H1 (cell line): ENCODE measurements at regions of chr16 and their contacts with region 1.

Region 1: GRCh38 chr16:84746882-84747281 is 47.1 kb downstream of the USP10 start:
- DNase-seq: no peak
- H3K4me3 ChIP-seq: no peak overlapping the region
- H3K27ac ChIP-seq: no peak overlapping the region
- H3K4me1 ChIP-seq: no peaks in the 10 kb centered on the region; a peak in 1 of 7 replicates
- H3K27me3 ChIP-seq: no peaks in the 10 kb centered on the region
- CTCF ChIP-seq: peak; percentile 43 to 63 (median 62)
- EP300 ChIP-seq: no peak
- POLR2A ChIP-seq: no peak
- RAD21 ChIP-seq: no peak; a peak in 1 of 4 replicates

Region 2: GRCh38 chr16:84663433-84664101 is 83.3 kb before region 1 on chr16:
- CTCF ChIA-PET with region 1: interaction called, 11 read pairs
- POLR2A ChIA-PET with region 1: no interaction called
- DNase-seq: no peak
- H3K4me3 ChIP-seq: no peak overlapping the region
- H3K27ac ChIP-seq: no peak overlapping the region
- H3K4me1 ChIP-seq: peaks cover 1 to 9% (median 6%) of the 10 kb centered on the region in 4 experiments; a peak in 4 of 7 replicates
- H3K27me3 ChIP-seq: no peaks in the 10 kb centered on the region
- CTCF ChIP-seq: no peak
- EP300 ChIP-seq: no peak
- POLR2A ChIP-seq: no peak
- RAD21 ChIP-seq: no peak

Region 3: DNA sequence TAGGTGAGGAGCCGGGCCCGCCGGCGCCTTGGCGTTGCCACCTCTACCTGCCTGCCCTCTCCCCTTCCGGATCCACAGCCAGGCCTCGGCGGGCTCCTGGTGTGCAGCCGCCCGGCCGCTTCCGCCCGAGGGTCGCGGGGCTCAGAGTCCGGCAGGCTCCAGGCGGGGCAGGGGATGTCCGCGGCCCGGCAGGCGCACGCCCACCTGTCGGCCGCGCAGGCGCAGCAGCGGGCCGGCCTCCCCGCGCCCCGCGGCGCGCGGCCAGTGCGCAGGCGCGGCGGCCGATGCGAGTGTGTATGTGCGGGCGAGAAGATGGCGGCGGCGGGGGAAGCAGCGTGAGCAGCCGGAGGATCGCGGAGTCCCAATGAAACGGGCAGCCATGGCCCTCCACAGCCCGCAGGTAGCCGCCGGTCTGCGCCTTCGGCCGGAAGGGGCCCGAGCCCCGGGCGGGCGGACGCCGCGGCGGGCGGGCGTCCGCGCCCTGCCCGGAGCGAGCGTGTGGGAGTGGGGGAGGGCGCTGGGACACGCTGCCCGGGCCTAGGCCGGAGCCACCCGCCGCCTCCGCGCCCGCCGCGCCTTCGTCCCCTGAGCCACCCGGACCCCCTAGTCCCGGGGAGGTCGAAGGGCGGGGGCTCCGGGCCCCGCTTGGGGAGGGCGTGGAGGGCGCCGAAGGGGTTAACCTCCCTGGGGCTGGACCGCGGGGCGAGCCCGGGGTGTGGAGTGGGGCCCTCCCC is 47.0 kb before region 1 on chr16 and contains the start of gene USP10:
- CTCF ChIA-PET with region 1: no interaction called
- POLR2A ChIA-PET with region 1: no interaction called
- DNase-seq: peak; percentile 71 to 88
- H3K4me3 ChIP-seq: peak within 1 kb of the TSS; percentile 84 to 99 (median 88)
- H3K27ac ChIP-seq: peak within 1 kb of the TSS; percentile 92
- H3K4me1 ChIP-seq: peaks cover 0 to 9% (median 7%) of the 10 kb centered on the region in 4 experiments; a peak in 5 of 7 replicates
- H3K27me3 ChIP-seq: no peaks in the 10 kb centered on the region
- CTCF ChIP-seq: no peak
- EP300 ChIP-seq: 0 out of 3 replicates have a peak, but pooled peaks of 1 of the 2 experiments have one; percentile 34
- POLR2A ChIP-seq: peak; percentile 67 to 82; a peak in 2 of 3 replicates
- RAD21 ChIP-seq: no peak
- total RNA-seq, gene USP10: 186 and 195 TPM in 2 replicates

Region 4: DNA sequence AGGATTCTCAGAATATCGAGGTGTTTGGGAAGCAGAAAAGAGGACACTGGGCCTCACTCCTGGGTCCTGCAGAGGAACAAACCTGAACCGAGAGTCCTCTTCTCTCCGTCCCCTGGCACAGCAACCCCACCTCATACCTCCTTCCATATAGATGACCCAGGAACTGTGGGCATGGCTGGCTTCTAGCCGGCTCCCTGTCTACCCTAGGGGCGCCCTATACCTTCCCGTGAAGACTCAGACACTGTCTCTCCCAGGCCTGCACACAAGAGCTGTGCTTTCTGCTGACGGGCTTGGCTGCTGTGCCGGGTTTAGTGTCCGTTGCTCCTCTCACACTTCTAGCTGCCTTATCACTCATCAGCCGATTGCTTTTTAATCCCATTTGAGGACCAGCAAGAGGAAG is 26.4 kb after region 1 on chr16:
- CTCF ChIA-PET with region 1: interaction called, 21 read pairs
- POLR2A ChIA-PET with region 1: no interaction called
- DNase-seq: no peak
- H3K4me3 ChIP-seq: no peak overlapping the region
- H3K27ac ChIP-seq: no peak overlapping the region
- H3K4me1 ChIP-seq: no peaks in the 10 kb centered on the region
- H3K27me3 ChIP-seq: no peaks in the 10 kb centered on the region
- CTCF ChIP-seq: peak in 1 of 3 experiments; percentile 11; a peak in 1 of 4 replicates
- EP300 ChIP-seq: no peak
- POLR2A ChIP-seq: no peak
- RAD21 ChIP-seq: peak in 1 of 2 experiments; percentile 36; a peak in 2 of 4 replicates

Region 5: DNA sequence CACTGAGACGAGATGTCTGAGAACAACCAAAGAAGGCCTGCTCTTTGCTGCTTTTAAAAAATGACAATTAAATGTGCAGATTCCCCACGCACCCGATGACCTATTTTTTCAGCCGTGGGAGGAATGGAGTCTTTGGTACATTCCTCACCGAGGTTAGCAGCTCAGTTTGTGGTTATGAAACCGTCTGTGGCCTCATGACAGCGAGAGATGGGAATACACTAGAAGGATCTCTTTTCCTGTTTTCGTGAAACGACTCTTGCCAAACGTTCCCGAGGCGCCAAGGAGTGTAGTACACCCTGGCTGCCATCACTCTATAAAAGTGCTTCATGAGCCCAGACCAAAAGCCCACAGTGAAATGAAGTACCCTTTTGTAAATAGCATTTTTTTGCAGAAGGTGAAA is 160.7 kb after region 1 on chr16:
- CTCF ChIA-PET with region 1: no interaction called
- POLR2A ChIA-PET with region 1: no interaction called
- DNase-seq: no peak
- H3K4me3 ChIP-seq: no peak overlapping the region
- H3K27ac ChIP-seq: no peak overlapping the region
- H3K4me1 ChIP-seq: no peaks in the 10 kb centered on the region; a peak in 1 of 7 replicates
- H3K27me3 ChIP-seq: no peaks in the 10 kb centered on the region
- CTCF ChIP-seq: no peak
- EP300 ChIP-seq: no peak
- POLR2A ChIP-seq: no peak
- RAD21 ChIP-seq: no peak